Activated CD4-positive, alpha-beta T cell treated with anti-CD3 and anti-CD28 coated beads for 36 hours (primary cell): ENCODE measurements at regions of chr19 and their contacts with region 1.

Region 1: GRCh38 chr19:3557461-3558248 is at the start of gene MFSD12:
- DNase-seq: peak; percentile 97
- ATAC-seq: peak; percentile 89
- H3K4me3 Mint-ChIP-seq: peak within 1 kb of the TSS; percentile 96
- H3K27ac Mint-ChIP-seq: peak within 1 kb of the TSS; percentile 92
- H3K4me1 Mint-ChIP-seq: peaks cover 36% of the 10 kb centered on the region
- H3K27me3 Mint-ChIP-seq: no peaks in the 10 kb centered on the region
- total RNA-seq, gene MFSD12: 44.7 to 46.7 TPM

Region 2: DNA sequence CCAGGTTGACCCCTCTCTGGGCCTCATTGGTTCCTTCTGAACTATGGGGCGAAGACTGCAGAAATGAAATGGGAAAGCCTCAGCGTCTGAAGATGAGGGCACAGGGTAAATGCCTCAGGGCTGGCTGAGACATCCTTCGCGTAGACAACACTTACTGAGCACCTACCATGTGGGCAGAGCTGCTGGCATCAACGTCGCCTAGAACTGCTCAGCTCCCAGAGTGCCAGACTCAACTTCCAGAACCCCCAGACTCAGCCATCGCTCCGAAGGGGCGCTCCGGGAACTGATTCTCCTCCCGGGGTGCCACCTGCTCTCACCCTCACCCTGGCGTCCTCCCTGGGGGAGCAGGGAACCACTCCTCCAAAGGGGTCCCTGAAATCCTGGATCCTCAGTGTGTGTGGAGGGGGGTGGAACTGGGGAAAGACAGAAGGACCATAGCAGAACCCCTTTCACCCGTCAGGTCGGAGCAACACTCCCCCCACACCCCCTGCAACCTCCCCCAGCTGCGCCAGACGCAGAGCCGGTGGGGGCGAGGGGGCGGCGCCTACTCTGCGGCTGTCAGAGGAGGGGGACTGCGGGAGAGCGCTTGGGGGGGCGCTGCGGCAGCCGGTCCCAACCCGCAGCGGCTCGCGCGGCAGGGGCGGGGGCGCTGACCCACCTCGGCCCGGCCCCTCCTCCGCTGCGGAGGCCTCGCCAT is 199.5 kb before region 1 on chr19:
- CTCF ChIA-PET with region 1: no interaction called
- POLR2A ChIA-PET with region 1: no interaction called
- intact Hi-C with region 1: no loop called
- DNase-seq: peak; percentile 32
- ATAC-seq: no peak
- H3K4me3 Mint-ChIP-seq: peak overlapping the region; percentile 60
- H3K27ac Mint-ChIP-seq: no peak overlapping the region
- H3K4me1 Mint-ChIP-seq: peaks cover 30% of the 10 kb centered on the region
- H3K27me3 Mint-ChIP-seq: peaks cover 11% of the 10 kb centered on the region

Region 3: GRCh38 chr19:3434712-3435553 is 122.7 kb before region 1 on chr19:
- CTCF ChIA-PET with region 1: interaction called, 4 read pairs
- POLR2A ChIA-PET with region 1: no interaction called
- intact Hi-C with region 1: loop called in 1 of 2 experiments (anchors 1 kb)
- DNase-seq: peak; percentile 98
- ATAC-seq: peak; percentile 96
- H3K4me3 Mint-ChIP-seq: peak overlapping the region; percentile 84
- H3K27ac Mint-ChIP-seq: peak overlapping the region; percentile 99
- H3K4me1 Mint-ChIP-seq: peaks cover 13% of the 10 kb centered on the region
- H3K27me3 Mint-ChIP-seq: no peaks in the 10 kb centered on the region

Region 4: DNA sequence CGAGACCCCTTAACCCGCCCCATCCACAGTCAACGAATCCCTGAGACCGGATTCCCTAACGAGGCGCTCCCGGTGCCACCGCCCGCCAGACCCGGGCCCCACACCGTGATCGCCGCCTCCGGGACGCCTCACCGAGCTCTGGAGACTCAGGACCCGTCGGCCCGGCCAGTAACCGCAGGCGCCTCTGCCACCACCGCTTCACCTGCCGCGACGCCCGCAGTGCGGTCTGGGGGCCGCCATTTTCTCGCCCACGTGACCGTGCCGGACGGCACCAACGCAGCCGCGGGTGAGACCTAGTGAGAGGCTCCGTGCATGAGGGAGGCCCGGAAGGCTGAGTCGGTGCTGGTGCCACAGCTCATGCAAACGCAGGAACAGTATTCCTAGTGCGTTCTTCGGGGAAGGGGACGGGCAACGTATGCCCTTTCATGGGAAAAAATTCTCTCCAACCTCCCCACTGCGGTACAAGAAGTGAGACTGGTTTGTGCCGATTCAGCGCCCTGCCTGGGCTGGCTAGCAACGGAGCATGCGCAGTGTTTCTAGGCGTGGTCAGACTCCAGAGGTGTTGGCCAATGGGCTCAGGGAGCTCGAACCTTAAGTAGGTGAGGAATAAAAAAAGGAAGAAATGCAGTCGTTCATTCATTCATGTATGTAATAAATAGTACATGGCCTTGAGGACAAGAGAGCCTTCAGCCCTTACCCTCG is 57.1 kb before region 1 on chr19 and contains the start of gene DOHH:
- CTCF ChIA-PET with region 1: no interaction called
- POLR2A ChIA-PET with region 1: no interaction called
- intact Hi-C with region 1: loop called (anchors 1 to 5 kb)
- DNase-seq: peak; percentile 98
- ATAC-seq: peak; percentile 95
- H3K4me3 Mint-ChIP-seq: peak within 1 kb of the TSS; percentile 91
- H3K27ac Mint-ChIP-seq: peak within 1 kb of the TSS; percentile 97
- H3K4me1 Mint-ChIP-seq: peaks cover 26% of the 10 kb centered on the region
- H3K27me3 Mint-ChIP-seq: no peaks in the 10 kb centered on the region
- total RNA-seq, gene DOHH: 9.6 to 15.4 TPM

Region 5: DNA sequence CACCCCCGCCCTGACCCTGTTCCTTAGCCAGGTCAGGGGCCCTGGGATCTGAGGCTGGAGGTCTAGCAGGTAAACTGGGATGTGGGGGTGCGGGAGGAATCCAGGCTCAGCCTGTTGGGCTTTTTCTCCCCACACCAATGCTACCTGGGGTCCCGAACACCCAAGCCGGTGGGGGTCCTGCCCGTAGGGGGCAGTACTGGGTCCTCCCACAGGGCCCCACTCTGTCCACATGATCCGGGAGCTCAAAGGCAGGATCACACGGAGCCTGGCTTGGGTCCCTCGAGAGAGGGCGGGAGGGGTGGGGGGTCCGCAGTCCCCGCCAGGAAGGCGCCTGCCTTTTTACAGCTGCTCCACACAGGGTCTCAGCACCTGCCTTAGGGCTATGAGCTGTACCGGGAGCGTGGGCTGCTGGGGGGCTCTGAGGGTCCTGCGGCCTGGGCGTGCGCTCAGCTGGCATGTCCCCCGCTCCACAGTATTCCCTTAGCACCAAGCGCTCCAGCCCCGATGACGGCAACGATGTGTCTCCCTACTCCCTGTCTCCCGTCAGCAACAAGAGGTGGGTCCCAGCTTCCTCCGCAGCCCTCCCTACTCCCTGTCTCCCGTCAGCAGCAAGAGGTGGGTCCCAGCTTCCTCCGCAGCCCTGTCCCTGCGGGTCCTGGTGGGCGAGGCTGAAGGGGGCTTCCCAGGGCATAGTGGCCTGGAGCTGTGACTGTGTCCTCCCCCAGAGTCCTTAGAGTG is 31.0 kb before region 1 on chr19:
- CTCF ChIA-PET with region 1: no interaction called
- POLR2A ChIA-PET with region 1: no interaction called
- intact Hi-C with region 1: no loop called
- DNase-seq: no peak
- ATAC-seq: no peak
- H3K4me3 Mint-ChIP-seq: no peak overlapping the region
- H3K27ac Mint-ChIP-seq: no peak overlapping the region
- H3K4me1 Mint-ChIP-seq: no peaks in the 10 kb centered on the region
- H3K27me3 Mint-ChIP-seq: no peaks in the 10 kb centered on the region

Region 6: GRCh38 chr19:3544742-3545668 is 12.7 kb before region 1 on chr19:
- CTCF ChIA-PET with region 1: interaction called, 23 read pairs
- POLR2A ChIA-PET with region 1: interaction called, 3 read pairs
- intact Hi-C with region 1: no loop called
- DNase-seq: peak; percentile 90
- ATAC-seq: peak; percentile 84
- H3K4me3 Mint-ChIP-seq: no peak overlapping the region
- H3K27ac Mint-ChIP-seq: peak overlapping the region; percentile 58
- H3K4me1 Mint-ChIP-seq: peaks cover 6% of the 10 kb centered on the region
- H3K27me3 Mint-ChIP-seq: no peaks in the 10 kb centered on the region

Region 7: GRCh38 chr19:3700221-3701032 is 142.8 kb after region 1 on chr19 and contains the start of gene PIP5K1C:
- CTCF ChIA-PET with region 1: no interaction called
- POLR2A ChIA-PET with region 1: no interaction called
- intact Hi-C with region 1: loop called in 1 of 2 experiments (anchors 1 kb)
- DNase-seq: peak; percentile 97
- ATAC-seq: peak; percentile 95
- H3K4me3 Mint-ChIP-seq: peak within 1 kb of the TSS; percentile 87
- H3K27ac Mint-ChIP-seq: peak within 1 kb of the TSS; percentile 80
- H3K4me1 Mint-ChIP-seq: peaks cover 17% of the 10 kb centered on the region
- H3K27me3 Mint-ChIP-seq: no peaks in the 10 kb centered on the region
- total RNA-seq, gene PIP5K1C: 14.6 to 15.3 TPM

Region 8: DNA sequence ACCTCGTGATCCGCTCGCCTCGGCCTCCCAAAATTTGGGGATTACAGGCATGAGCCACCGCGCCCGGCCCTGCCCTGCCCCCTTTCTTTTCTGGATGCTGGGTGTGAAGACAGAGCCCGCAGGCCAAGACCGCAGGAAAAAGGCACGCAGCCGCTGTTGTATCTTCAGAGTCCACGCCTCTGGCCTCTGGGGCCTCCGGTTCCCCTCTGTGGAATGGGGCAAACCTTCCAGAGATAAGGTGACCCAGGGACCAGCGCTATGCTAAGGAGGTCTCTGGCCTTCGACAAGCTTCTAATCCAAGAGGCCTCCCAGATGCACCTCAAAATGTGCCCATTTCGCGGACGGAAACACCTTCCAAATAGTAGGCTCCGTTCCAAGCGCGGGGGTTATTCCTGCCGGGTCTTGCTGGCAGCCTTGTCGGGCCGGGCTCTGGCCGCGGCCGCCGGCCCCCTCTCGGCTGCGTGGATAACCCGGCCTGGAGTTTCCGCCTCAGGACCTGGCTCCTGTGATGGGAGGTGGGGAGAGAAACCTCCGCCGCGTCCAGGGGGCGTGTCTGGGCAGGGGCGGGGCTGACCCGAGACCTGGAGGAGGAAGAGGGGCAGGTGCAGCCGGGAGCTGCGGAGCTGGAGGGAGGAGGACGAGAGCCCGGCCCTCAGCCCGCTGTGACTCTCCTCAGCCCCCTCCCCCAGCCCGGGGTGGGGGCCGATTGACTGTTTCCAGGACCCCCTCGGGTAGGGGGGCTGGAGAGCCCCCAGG is 163.7 kb after region 1 on chr19:
- CTCF ChIA-PET with region 1: no interaction called
- POLR2A ChIA-PET with region 1: interaction called, 3 read pairs
- intact Hi-C with region 1: loop called in 1 of 2 experiments (anchors 1 kb)
- DNase-seq: peak; percentile 92
- ATAC-seq: peak; percentile 94
- H3K4me3 Mint-ChIP-seq: peak overlapping the region; percentile 13
- H3K27ac Mint-ChIP-seq: no peak overlapping the region
- H3K4me1 Mint-ChIP-seq: peaks cover 10% of the 10 kb centered on the region
- H3K27me3 Mint-ChIP-seq: peaks cover 4% of the 10 kb centered on the region

Region 9: GRCh38 chr19:4007021-4007835 is 449.6 kb after region 1 on chr19 and contains the start of gene PIAS4:
- CTCF ChIA-PET with region 1: no interaction called
- POLR2A ChIA-PET with region 1: no interaction called
- intact Hi-C with region 1: loop called in 1 of 2 experiments (anchors 1 kb)
- DNase-seq: peak; percentile 97
- ATAC-seq: peak; percentile 92
- H3K4me3 Mint-ChIP-seq: peak within 1 kb of the TSS; percentile 75
- H3K27ac Mint-ChIP-seq: peak within 1 kb of the TSS; percentile 71
- H3K4me1 Mint-ChIP-seq: peaks cover 27% of the 10 kb centered on the region
- H3K27me3 Mint-ChIP-seq: no peaks in the 10 kb centered on the region
- total RNA-seq, gene PIAS4: 23.0 to 37.3 TPM